IMR-90 (cell line): ENCODE measurements at regions of chr17 and their contacts with region 1.

Region 1: DNA sequence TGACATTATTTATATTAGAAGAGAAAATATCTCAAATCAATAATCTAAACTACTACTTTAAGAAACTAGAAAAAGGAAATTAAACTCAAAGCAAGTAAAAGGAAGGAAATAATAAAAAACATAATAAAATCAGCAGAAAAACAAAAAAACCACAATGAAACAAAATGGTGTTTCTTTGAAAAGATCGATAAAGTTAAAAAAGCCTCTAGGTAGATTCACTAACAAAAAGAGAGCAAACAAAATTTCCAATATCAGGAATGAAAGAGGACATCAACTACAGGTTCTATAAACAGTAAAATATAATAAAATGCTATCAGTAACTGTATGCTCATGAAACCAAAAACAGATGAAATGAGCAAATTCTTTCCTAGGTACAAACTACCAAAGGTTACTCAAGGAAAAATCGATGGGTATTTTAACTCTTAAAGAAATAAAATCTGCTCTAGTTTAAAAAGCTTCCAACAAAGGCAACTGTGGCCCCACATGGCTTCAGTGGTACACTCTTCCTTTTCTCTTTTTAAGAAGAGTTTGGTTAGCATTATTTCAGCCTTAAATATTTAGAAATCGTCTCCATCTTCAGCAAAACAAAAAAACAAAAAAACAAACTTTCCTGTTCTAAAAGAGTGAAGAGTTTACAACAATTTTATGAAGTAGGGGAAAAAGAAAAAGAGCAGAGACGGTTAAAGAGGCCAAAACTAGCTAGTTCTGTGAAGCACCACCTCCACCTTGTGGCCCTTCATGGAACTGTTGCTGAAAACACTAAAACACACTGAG is 102.2 kb downstream of the TRIM37 start:
- DNase-seq: peak; percentile 53
- ATAC-seq: peak; percentile 78
- H3K4me3 ChIP-seq: no peak overlapping the region
- H3K27ac ChIP-seq: no peak overlapping the region
- H3K4me1 ChIP-seq: peaks cover 5% of the 10 kb centered on the region
- H3K27me3 ChIP-seq: no peaks in the 10 kb centered on the region
- CTCF ChIP-seq: peak; percentile 89
- POLR2A ChIP-seq: peak; percentile 45; the same call in 1 of the 2 replicates
- RAD21 ChIP-seq: peak; percentile 94

Region 2: GRCh38 chr17:58587702-58588254 is 416.7 kb before region 1 on chr17:
- CTCF ChIA-PET with region 1: interaction called, 4 read pairs
- POLR2A ChIA-PET with region 1: no interaction called
- dilution Hi-C with region 1: no loop called
- in situ Hi-C with region 1: loop called (anchors 10 kb)
- intact Hi-C with region 1: loop called (anchors 1 kb)
- DNase-seq: peak; percentile 27
- ATAC-seq: peak; percentile 87
- H3K4me3 ChIP-seq: no peak overlapping the region
- H3K27ac ChIP-seq: no peak overlapping the region
- H3K4me1 ChIP-seq: no peaks in the 10 kb centered on the region
- H3K27me3 ChIP-seq: peaks cover 17% of the 10 kb centered on the region
- CTCF ChIP-seq: peak; percentile 78
- POLR2A ChIP-seq: no peak
- RAD21 ChIP-seq: peak; percentile 80

Region 3: DNA sequence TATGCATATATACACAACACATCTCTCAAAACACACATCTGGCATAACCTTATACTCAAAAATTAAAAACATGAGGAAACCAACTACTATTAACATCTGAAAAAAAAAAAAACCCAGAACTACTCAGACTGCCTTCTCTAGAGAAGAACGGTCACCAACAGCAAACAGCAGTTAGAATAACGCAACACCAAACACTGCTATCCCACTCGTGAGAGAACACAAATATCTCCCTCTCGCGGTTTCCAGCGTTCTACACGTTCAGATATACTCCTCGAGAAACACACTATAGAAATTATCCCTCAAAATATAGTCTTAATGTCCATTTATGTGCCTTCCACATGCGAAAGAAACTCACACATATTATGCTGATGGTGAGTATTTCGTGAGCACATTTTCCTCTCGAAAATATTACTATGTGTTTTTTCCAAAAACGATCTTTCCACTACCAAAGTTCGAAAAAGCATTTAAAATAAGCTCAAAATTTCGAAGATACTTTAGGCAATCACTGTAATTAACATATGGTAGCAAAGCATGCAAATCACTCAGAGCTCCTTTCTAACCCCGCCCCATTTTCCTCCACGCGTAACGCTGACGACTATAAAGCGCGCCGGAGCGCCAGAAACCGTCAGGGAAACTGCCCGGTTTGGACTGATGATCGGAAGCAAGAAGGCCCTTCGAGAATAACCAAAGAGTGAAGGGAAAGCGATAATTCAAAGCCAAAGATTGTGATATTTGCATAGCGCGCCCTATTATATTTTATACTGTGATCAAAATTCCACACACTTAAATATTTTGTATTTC is 372.8 kb before region 1 on chr17:
- CTCF ChIA-PET with region 1: no interaction called
- POLR2A ChIA-PET with region 1: no interaction called
- dilution Hi-C with region 1: no loop called
- in situ Hi-C with region 1: no loop called
- intact Hi-C with region 1: loop called (anchors 1 kb)
- DNase-seq: peak; percentile 99
- ATAC-seq: peak; percentile 94
- H3K4me3 ChIP-seq: peak overlapping the region; percentile 42; the same call in 1 of the 2 replicates
- H3K27ac ChIP-seq: peak overlapping the region; percentile 68; the same call in 1 of the 2 replicates
- H3K4me1 ChIP-seq: no peaks in the 10 kb centered on the region
- H3K27me3 ChIP-seq: no peaks in the 10 kb centered on the region
- CTCF ChIP-seq: 0 out of 2 replicates have a peak, but pooled peaks have one; percentile 22
- POLR2A ChIP-seq: peak; percentile 100
- RAD21 ChIP-seq: no peak

Region 4: DNA sequence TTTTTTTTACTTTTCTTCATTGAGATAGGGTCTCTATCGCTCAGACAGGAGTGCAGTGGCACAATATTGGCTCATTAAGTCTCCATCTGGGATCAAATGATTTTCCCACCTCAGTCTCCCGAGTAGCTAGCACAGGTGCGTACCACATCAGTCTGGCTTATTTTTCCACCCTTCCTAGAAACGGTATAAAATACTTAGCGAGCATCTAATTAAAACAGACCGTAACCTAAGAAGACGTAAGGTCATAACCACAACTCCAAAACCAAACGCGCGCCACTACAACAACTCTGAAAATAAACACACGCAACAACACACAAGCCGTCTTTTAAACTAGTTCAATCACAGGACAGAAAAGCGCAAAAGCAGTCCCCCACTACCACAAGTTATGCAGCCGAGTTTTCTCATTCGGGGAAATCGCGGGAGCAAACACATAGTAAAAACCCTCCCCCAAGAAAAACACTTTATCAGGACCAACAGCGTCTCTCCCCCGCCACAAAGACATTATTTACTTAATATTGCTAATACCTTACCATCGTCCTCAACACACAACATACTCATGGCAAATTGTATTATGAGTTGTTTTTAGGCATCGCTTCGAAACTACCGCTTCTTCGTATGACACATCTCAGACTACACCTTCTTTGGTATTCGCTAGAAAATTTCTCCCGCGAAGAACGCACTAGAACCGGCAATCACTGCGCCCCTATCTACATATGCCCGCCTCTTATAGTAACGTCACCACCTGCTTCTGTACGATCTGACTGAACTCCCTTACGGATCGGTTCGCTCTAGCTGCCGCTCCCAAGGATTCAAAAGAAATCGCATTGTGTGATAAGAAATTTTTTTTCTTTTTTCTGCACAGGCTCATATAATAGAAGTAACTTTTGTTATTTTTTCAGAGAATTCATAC is 345.5 kb before region 1 on chr17:
- CTCF ChIA-PET with region 1: no interaction called
- POLR2A ChIA-PET with region 1: no interaction called
- dilution Hi-C with region 1: no loop called
- in situ Hi-C with region 1: no loop called
- intact Hi-C with region 1: loop called (anchors 5 kb)
- DNase-seq: peak; percentile 99
- ATAC-seq: peak; percentile 94
- H3K4me3 ChIP-seq: peak overlapping the region; percentile 22
- H3K27ac ChIP-seq: peak overlapping the region; percentile 82
- H3K4me1 ChIP-seq: no peaks in the 10 kb centered on the region
- H3K27me3 ChIP-seq: no peaks in the 10 kb centered on the region
- CTCF ChIP-seq: no peak
- POLR2A ChIP-seq: peak; percentile 100
- RAD21 ChIP-seq: no peak

Region 5: DNA sequence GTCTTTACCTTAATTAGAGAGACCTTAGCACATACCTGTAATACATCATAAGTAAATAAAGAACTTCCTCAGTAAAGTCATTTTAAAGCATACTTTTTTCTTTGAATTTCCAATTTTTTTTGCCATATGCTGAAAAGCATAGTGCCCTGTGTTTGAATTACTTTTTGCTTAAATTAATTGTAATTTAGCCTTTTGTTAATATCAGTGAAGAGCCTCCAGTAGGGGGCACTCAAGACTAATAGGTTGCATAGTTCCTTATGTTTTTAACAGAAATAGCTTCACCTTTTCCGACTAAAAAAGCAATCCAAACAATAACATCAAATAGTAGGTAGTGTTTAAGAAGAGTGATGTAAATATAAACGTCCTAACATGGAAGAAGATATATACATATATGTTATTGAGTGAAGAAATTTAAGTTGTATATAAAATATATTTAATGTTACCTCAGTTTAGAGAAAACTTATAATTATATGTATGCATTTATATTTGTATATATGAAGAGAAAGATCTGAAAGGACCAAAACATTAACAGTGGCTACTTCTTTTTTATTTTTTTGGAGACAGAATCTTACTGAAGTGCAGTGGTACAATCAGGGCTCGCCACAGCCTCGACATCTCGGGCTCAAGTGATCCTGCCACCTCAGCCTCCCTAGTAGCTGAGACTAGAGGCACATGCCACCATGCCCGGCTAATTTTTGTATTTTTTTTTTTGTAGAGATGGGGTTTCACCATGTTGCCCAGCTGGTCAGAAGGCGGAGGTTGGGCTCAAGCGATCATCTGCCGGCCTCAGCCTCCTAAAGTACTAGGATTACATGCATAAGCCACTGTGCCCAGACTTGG is 293.4 kb before region 1 on chr17:
- CTCF ChIA-PET with region 1: interaction called, 28 read pairs
- POLR2A ChIA-PET with region 1: no interaction called
- dilution Hi-C with region 1: no loop called
- in situ Hi-C with region 1: loop called (anchors 5 kb)
- intact Hi-C with region 1: loop called (anchors 1 kb)
- DNase-seq: peak; percentile 69
- ATAC-seq: peak; percentile 65; the same call in 1 of the 2 replicates
- H3K4me3 ChIP-seq: no peak overlapping the region
- H3K27ac ChIP-seq: no peak overlapping the region
- H3K4me1 ChIP-seq: no peaks in the 10 kb centered on the region
- H3K27me3 ChIP-seq: no peaks in the 10 kb centered on the region
- CTCF ChIP-seq: peak; percentile 79
- POLR2A ChIP-seq: no peak
- RAD21 ChIP-seq: peak; percentile 75

Region 6: GRCh38 chr17:58786613-58787295 is 217.8 kb before region 1 on chr17:
- CTCF ChIA-PET with region 1: no interaction called
- POLR2A ChIA-PET with region 1: no interaction called
- dilution Hi-C with region 1: no loop called
- in situ Hi-C with region 1: no loop called
- intact Hi-C with region 1: loop called (anchors 2 kb)
- DNase-seq: peak; percentile 87
- ATAC-seq: peak; percentile 32
- H3K4me3 ChIP-seq: no peak overlapping the region
- H3K27ac ChIP-seq: peak overlapping the region; percentile 8; the same call in 1 of the 2 replicates
- H3K4me1 ChIP-seq: no peaks in the 10 kb centered on the region
- H3K27me3 ChIP-seq: peaks cover 3% of the 10 kb centered on the region; the same call in 1 of the 2 replicates
- CTCF ChIP-seq: no peak
- POLR2A ChIP-seq: no peak
- RAD21 ChIP-seq: no peak

Region 7: DNA sequence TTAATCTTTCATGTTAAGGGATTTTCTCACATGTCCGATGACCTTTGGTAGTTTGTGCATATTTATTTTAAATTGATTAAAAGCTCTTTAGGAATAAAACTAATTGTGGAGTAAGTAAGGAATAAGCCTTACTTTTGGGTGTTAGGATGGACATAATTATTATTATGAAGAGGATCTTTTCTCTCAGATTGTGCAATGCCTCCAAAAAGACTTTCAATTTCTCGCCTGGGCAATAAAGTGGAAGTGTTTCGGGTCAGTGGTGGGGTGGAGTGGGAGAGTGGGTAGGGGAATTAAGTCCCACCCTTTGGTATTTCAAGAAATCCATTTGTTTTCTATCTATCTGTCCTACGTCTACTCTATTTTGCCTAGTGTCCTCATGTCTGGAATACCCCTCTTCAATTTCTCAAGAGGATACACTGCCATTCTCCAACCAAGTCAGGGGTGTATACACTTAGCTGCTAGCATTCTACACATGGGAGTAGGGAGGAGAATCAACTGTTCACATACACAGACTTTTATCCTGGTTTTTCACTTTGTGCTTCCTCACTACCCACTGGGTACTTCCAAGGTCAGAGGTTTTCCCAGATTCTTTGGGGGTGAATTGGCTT is 119.0 kb before region 1 on chr17:
- CTCF ChIA-PET with region 1: no interaction called
- POLR2A ChIA-PET with region 1: no interaction called
- dilution Hi-C with region 1: no loop called
- in situ Hi-C with region 1: no loop called
- intact Hi-C with region 1: no loop called
- DNase-seq: no peak
- ATAC-seq: no peak
- H3K4me3 ChIP-seq: no peak overlapping the region
- H3K27ac ChIP-seq: no peak overlapping the region
- H3K4me1 ChIP-seq: no peaks in the 10 kb centered on the region
- H3K27me3 ChIP-seq: no peaks in the 10 kb centered on the region; the same call in 1 of the 2 replicates
- CTCF ChIP-seq: no peak
- POLR2A ChIP-seq: no peak
- RAD21 ChIP-seq: no peak

Region 8: DNA sequence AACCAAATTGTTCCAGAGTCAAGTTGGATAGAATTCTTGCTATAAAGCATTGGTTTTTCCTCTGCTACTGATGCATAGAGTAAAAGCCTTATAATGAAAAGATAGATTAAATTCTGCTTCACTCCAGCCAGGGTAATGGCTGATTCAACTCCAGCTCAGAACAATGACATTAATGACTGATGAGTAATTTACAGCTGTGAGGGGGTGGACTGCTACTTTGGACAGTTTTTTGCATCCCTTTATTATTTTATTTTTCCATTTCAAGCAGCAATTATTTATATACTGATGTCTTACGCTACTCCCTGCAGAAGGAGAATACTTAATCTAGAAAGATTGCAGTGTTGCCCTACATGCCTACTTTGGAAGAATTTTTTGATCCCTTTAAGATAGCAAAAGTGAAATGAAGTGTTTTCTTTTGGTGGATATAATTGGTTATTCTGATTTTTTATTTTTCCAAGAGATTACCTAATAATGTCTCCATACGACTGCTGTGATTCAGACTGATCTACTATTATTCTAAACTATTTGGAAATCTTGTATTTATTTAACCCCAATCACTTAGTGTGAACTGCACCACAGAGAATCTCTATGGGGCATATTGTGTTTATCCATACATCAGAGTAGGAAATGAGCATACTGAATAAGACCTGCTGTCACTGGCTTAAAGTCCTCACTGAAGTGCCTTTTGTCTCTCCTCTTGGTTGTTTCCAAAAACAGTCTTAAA is 47.4 kb before region 1 on chr17:
- CTCF ChIA-PET with region 1: no interaction called
- POLR2A ChIA-PET with region 1: no interaction called
- dilution Hi-C with region 1: no loop called
- in situ Hi-C with region 1: no loop called
- intact Hi-C with region 1: loop called (anchors 2 kb)
- DNase-seq: peak; percentile 67
- ATAC-seq: peak; percentile 69
- H3K4me3 ChIP-seq: no peak overlapping the region
- H3K27ac ChIP-seq: no peak overlapping the region
- H3K4me1 ChIP-seq: no peaks in the 10 kb centered on the region
- H3K27me3 ChIP-seq: no peaks in the 10 kb centered on the region
- CTCF ChIP-seq: no peak
- POLR2A ChIP-seq: no peak
- RAD21 ChIP-seq: no peak